Posterior cingulate gyrus (tissue), 11 donors: ENCODE measurements at regions of chr19 and their contacts with region 1.

Region 1: GRCh38 chr19:44141191-44142058 is at the start of gene ZNF234:
- DNase-seq: peak; percentile 78 to 97 (median 90)

Region 2: GRCh38 chr19:44071824-44072542 is 69.4 kb before region 1 on chr19 and contains the start of gene ZNF284:
- intact Hi-C with region 1: loop called (anchors 1 kb)
- DNase-seq: peak; percentile 86 to 98 (median 90)